Motor neuron (in vitro differentiated cells): ENCODE measurements at regions of chr1 and their contacts with region 1.

Region 1: GRCh38 chr1:207077470-207078377 is 10.9 kb upstream of the C4BPB start:
- ATAC-seq: peak; percentile 55 to 93 (median 72)
- H3K4me3 ChIP-seq: no peak overlapping the region
- H3K27ac ChIP-seq: no peak overlapping the region
- H3K4me1 ChIP-seq: no peaks in the 10 kb centered on the region

Region 2: GRCh38 chr1:206738370-206739366 is 339.1 kb before region 1 on chr1:
- in situ Hi-C with region 1: no loop called
- ATAC-seq: peak in 3 of 8 experiments; percentile 48 to 69 (median 54)
- H3K4me3 ChIP-seq: no peak overlapping the region
- H3K27ac ChIP-seq: no peak overlapping the region
- H3K4me1 ChIP-seq: no peaks in the 10 kb centered on the region

Region 3: GRCh38 chr1:207259391-207259790 is 181.7 kb after region 1 on chr1:
- in situ Hi-C with region 1: loop called in 1 of 9 experiments (anchors 25 kb)
- ATAC-seq: peak in 3 of 8 experiments; percentile 73 to 88 (median 83)
- H3K4me3 ChIP-seq: no peak overlapping the region
- H3K27ac ChIP-seq: no peak overlapping the region
- H3K4me1 ChIP-seq: no peaks in the 10 kb centered on the region

Region 4: DNA sequence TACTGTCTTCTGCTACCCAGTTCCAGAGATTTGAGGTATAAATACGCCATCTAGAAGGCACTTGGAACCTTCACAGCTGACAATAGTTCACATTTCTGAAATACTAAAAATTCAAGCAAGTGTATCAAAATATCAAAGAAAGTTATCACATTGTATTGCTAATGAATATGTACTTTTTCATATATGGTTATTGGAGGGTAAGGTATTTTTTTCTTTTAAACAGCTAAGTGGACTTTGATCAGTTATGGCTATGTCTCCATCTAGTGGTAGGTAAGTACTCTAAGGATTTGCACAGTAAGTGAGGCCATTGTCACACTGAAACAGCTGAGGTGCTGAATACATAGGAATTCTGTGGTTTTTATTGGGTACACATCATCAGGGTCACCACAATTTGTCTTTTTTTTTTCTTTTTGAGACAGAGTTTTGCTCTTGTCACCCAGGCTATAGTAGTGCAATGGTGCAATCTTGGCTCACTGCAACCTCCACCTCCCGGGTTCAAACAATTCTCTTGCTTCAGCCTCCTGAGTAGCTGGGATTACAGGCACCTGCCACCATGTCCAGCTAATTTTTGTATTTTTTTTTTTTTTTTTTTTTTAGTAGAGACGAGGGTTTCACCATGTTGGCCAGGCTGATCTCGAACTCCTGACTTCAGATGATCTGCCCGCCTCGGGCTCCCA is 327.3 kb after region 1 on chr1:
- in situ Hi-C with region 1: loop called in 3 of 9 experiments (anchors 25 kb)
- ATAC-seq: peak; percentile 52 to 88 (median 72)
- H3K4me3 ChIP-seq: no peak overlapping the region
- H3K27ac ChIP-seq: no peak overlapping the region
- H3K4me1 ChIP-seq: no peaks in the 10 kb centered on the region

Region 5: GRCh38 chr1:207499573-207499972 is 421.8 kb after region 1 on chr1:
- in situ Hi-C with region 1: loop called in 2 of 9 experiments (anchors 25 kb)
- ATAC-seq: peak; percentile 67 to 86 (median 80)
- H3K4me3 ChIP-seq: no peak overlapping the region
- H3K27ac ChIP-seq: no peak overlapping the region
- H3K4me1 ChIP-seq: peaks cover 0 to 5% of the 10 kb centered on the region in 2 donors